Activated T-helper 1 cell treated with anti-CD3 and anti-CD28 coated beads, Interleukin-12 subunit alpha, Interleukin-12 subunit beta, Interleukin-2, Interleukin-4 antibody, amounts not matched to agents 30 ng/mL and 10 ng/mL and 1 ng/mL, durations not matched to agents 14 hours and 24 hours and 36 hours (primary cell): ENCODE measurements at regions of chr13 and their contacts with region 1.

Region 1: GRCh38 chr13:40969169-40969901 is 49.8 kb downstream of the ELF1 start:
- DNase-seq: no peak
- H3K4me3 Mint-ChIP-seq: no peak overlapping the region
- H3K27ac Mint-ChIP-seq: peak overlapping the region; percentile 14
- H3K4me1 Mint-ChIP-seq: peaks cover 74% of the 10 kb centered on the region
- H3K27me3 Mint-ChIP-seq: no peaks in the 10 kb centered on the region

Region 2: DNA sequence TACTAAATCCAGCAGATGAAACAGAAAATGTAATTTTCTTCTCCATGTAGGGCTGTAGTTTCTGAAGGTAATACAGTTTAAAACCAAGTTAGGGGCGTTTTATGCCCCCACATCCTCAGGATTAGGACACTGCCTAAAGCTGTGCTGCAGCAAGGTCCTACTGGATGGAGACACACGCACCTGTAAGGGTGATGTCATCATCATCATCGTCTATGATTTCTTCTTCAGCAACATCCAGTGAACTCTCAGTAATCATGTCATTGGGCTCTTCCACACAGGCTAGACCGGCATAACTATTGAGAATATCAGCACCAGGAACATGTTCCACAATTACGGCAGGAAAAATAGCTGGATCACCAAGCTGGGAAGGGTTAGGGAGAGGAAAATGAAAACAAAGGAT is 10.7 kb before region 1 on chr13:
- intact Hi-C with region 1: loop called (anchors 2 kb)
- DNase-seq: no peak
- H3K4me3 Mint-ChIP-seq: no peak overlapping the region
- H3K27ac Mint-ChIP-seq: no peak overlapping the region
- H3K4me1 Mint-ChIP-seq: peaks cover 43% of the 10 kb centered on the region
- H3K27me3 Mint-ChIP-seq: no peaks in the 10 kb centered on the region